CD4-positive, alpha-beta T cell (primary cell): ENCODE measurements at regions of chr12 and their contacts with region 1.

Region 1: DNA sequence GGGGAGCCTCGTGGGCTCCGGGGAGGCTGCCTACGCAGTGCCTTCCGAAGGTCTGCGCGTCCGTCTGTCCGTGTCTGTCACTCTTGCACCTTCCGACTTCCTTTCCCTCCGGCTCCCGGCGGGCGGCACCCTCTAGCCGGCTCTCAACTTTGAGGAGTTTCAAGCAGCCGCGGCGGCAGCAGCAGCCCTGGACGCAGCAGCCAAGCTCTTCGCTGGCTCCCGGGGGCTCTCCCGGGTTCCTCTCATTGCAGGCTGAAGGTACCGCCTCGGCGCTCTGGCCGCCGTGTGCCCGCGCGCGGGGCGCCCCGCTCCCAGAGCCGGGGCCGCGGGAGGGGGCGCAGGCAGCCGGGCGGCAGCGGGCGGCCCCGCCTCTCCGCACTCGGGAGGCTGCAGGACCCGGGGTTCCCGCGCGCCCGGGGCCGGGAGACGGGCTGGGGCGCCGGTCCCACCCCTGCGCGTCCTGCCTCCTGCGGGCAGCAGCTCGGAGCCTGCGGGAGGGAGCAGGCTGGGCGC is at the starts of genes AMIGO2 and PCED1B:
- DNase-seq: peak; percentile 30 to 79 (median 62)
- ATAC-seq: peak; percentile 52
- H3K4me3 ChIP-seq: peak within 1 kb of the TSS; percentile 84
- H3K4me3 Mint-ChIP-seq: peak within 1 kb of the TSS; percentile 95
- H3K27ac ChIP-seq: peak within 1 kb of the TSS; percentile 50 to 80
- H3K27ac Mint-ChIP-seq: peak within 1 kb of the TSS; percentile 98
- H3K4me1 ChIP-seq: peaks cover 34% of the 10 kb centered on the region
- H3K4me1 Mint-ChIP-seq: peaks cover 86% of the 10 kb centered on the region
- H3K27me3 ChIP-seq: no peaks in the 10 kb centered on the region
- H3K27me3 Mint-ChIP-seq: no peaks in the 10 kb centered on the region
- CTCF ChIP-seq: peak; percentile 37
- total RNA-seq, gene AMIGO2: 9.7 to 10.1 TPM
- total RNA-seq, gene PCED1B: 18.7 to 20.0 TPM

Region 2: GRCh38 chr12:47095446-47096236 is 16.1 kb after region 1 on chr12:
- CTCF ChIA-PET with region 1: no interaction called
- POLR2A ChIA-PET with region 1: interaction called, 20 read pairs
- intact Hi-C with region 1: no loop called
- DNase-seq: no peak
- ATAC-seq: no peak
- H3K4me3 ChIP-seq: no peak overlapping the region
- H3K4me3 Mint-ChIP-seq: no peak overlapping the region
- H3K27ac ChIP-seq: no peak overlapping the region
- H3K27ac Mint-ChIP-seq: no peak overlapping the region
- H3K4me1 ChIP-seq: no peaks in the 10 kb centered on the region
- H3K4me1 Mint-ChIP-seq: peaks cover 35% of the 10 kb centered on the region
- H3K27me3 ChIP-seq: no peaks in the 10 kb centered on the region
- H3K27me3 Mint-ChIP-seq: no peaks in the 10 kb centered on the region
- CTCF ChIP-seq: no peak

Region 3: GRCh38 chr12:47190271-47190750 is 110.8 kb after region 1 on chr12:
- CTCF ChIA-PET with region 1: interaction called, 4 read pairs
- POLR2A ChIA-PET with region 1: interaction called, 33 read pairs
- intact Hi-C with region 1: loop called (anchors 5 kb)
- DNase-seq: peak in 1 of 14 experiments; percentile 37
- ATAC-seq: no peak
- H3K4me3 ChIP-seq: no peak overlapping the region
- H3K4me3 Mint-ChIP-seq: no peak overlapping the region
- H3K27ac ChIP-seq: peak overlapping the region; percentile 14 to 16
- H3K27ac Mint-ChIP-seq: peak overlapping the region; percentile 87
- H3K4me1 ChIP-seq: peaks cover 63% of the 10 kb centered on the region
- H3K4me1 Mint-ChIP-seq: peaks cover 90% of the 10 kb centered on the region
- H3K27me3 ChIP-seq: no peaks in the 10 kb centered on the region
- H3K27me3 Mint-ChIP-seq: no peaks in the 10 kb centered on the region
- CTCF ChIP-seq: no peak

Region 4: DNA sequence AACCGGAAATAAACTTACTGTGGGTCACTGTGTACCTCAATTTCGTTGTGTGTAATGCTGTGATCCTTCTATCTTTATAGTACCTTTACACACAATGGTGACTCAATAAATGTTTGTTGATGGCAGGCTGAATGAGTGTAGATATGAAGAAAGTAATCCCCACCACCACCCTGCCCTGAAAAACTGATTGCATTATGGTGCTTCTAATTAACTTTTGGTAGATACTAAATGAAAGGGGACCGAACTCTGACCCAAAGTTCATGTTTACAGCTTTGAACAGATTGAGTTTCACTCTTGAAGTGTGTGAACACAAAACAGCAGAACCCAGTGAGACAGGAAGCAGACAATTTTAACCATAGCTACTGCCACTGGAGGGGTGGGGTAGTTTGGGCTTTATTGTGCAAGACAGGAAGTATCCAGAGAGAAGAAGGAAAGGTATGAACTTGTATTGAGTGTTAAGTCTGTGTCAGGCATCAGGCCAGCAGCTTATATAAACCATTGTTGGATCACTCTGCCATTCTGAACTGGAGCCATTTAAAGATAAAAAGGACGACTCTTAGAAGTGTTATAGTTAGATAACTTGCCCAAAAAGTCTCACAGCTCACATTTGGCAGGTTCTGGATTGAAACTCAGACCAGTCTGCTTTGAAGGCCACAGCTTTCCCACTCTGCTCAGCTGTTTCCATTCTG is 197.2 kb after region 1 on chr12:
- CTCF ChIA-PET with region 1: no interaction called
- POLR2A ChIA-PET with region 1: interaction called, 12 read pairs
- intact Hi-C with region 1: no loop called
- DNase-seq: peak; percentile 26 to 94 (median 50)
- ATAC-seq: peak; percentile 96
- H3K4me3 ChIP-seq: no peak overlapping the region
- H3K4me3 Mint-ChIP-seq: peak overlapping the region; percentile 61
- H3K27ac ChIP-seq: peak overlapping the region; percentile 72 to 81
- H3K27ac Mint-ChIP-seq: peak overlapping the region; percentile 90
- H3K4me1 ChIP-seq: peaks cover 40% of the 10 kb centered on the region
- H3K4me1 Mint-ChIP-seq: peaks cover 83% of the 10 kb centered on the region
- H3K27me3 ChIP-seq: no peaks in the 10 kb centered on the region
- H3K27me3 Mint-ChIP-seq: no peaks in the 10 kb centered on the region
- CTCF ChIP-seq: no peak

Region 5: GRCh38 chr12:47397664-47398281 is 318.2 kb after region 1 on chr12:
- CTCF ChIA-PET with region 1: interaction called, 11 read pairs
- POLR2A ChIA-PET with region 1: interaction called, 8 read pairs
- intact Hi-C with region 1: loop called (anchors 5 kb)
- DNase-seq: peak in 11 of 14 experiments; percentile 5 to 80 (median 33)
- ATAC-seq: peak; percentile 91
- H3K4me3 ChIP-seq: no peak overlapping the region
- H3K4me3 Mint-ChIP-seq: peak overlapping the region; percentile 49
- H3K27ac ChIP-seq: peak overlapping the region in 1 of 2 donors; percentile 23
- H3K27ac Mint-ChIP-seq: peak overlapping the region; percentile 63
- H3K4me1 ChIP-seq: peaks cover 40% of the 10 kb centered on the region
- H3K4me1 Mint-ChIP-seq: peaks cover 53% of the 10 kb centered on the region
- H3K27me3 ChIP-seq: no peaks in the 10 kb centered on the region
- H3K27me3 Mint-ChIP-seq: no peaks in the 10 kb centered on the region
- CTCF ChIP-seq: peak; percentile 66